Psoas muscle (tissue), 8 donors: ENCODE measurements at regions of chr10 and their contacts with region 1.

Region 1: GRCh38 chr10:683448-684071 is 5.9 kb downstream of the DIP2C start:
- DNase-seq: peak; percentile 47 to 78
- ATAC-seq: peak; percentile 75 to 83 (median 80)
- H3K4me3 ChIP-seq: peak overlapping the region; percentile 43
- H3K27ac ChIP-seq: peak overlapping the region; percentile 80
- H3K4me1 ChIP-seq: peaks cover 43% of the 10 kb centered on the region
- H3K27me3 ChIP-seq: no peaks in the 10 kb centered on the region
- CTCF ChIP-seq: no peak

Region 2: GRCh38 chr10:511101-511848 is 172.3 kb before region 1 on chr10:
- intact Hi-C with region 1: loop called (anchors 5 kb)
- DNase-seq: peak; percentile 93 to 98
- ATAC-seq: peak; percentile 93 to 97 (median 96)
- H3K4me3 ChIP-seq: peak overlapping the region; percentile 40
- H3K27ac ChIP-seq: peak overlapping the region; percentile 77
- H3K4me1 ChIP-seq: peaks cover 39% of the 10 kb centered on the region
- H3K27me3 ChIP-seq: no peaks in the 10 kb centered on the region
- CTCF ChIP-seq: peak; percentile 97

Region 3: DNA sequence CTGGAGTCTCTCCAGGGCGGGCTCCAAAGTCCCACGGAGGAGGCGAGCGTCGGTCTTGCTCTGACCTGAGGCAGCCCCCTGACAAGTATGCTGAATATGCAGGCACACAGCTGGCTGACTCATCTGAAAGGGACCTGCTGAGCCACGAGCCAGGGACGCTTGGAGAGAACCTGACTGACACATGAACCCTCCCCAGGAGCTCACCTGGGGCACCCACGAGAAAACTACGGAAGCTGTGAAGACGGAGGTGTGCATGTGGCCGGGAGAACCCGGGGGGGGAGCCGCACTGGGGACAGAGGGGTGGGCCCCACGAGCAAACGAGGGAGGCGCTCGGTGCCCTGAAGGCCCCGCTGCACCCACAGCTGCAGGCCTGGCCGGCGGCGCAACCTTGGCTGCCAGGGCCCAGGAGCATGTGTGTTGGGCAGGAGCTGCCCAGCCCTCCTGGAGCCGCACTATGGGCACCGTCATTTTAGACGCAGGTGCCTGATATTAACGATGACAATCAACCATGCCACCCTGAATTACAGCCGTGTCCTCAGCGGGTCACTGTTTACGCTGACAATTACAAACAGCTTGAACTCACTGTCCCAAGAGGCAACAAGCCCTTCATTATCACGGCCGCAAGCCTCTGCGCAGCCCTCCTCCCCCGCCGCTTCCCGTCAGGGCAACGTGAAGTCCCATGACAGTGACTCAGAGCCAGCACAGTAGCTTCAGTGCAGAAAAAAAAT is 58.8 kb before region 1 on chr10:
- intact Hi-C with region 1: loop called (anchors 5 kb)
- DNase-seq: peak; percentile 79 to 89
- ATAC-seq: peak; percentile 86 to 90 (median 88)
- H3K4me3 ChIP-seq: peak overlapping the region; percentile 47
- H3K27ac ChIP-seq: peak overlapping the region; percentile 94
- H3K4me1 ChIP-seq: peaks cover 41% of the 10 kb centered on the region
- H3K27me3 ChIP-seq: no peaks in the 10 kb centered on the region
- CTCF ChIP-seq: no peak